Activated naive CD4-positive, alpha-beta T cell treated with anti-CD3 and anti-CD28 coated beads, Interleukin-2, amount 10 ng/mL, durations not matched to agents 7 days and 5 days (primary cell): ENCODE measurements at regions of chr10 and their contacts with region 1.

Region 1: DNA sequence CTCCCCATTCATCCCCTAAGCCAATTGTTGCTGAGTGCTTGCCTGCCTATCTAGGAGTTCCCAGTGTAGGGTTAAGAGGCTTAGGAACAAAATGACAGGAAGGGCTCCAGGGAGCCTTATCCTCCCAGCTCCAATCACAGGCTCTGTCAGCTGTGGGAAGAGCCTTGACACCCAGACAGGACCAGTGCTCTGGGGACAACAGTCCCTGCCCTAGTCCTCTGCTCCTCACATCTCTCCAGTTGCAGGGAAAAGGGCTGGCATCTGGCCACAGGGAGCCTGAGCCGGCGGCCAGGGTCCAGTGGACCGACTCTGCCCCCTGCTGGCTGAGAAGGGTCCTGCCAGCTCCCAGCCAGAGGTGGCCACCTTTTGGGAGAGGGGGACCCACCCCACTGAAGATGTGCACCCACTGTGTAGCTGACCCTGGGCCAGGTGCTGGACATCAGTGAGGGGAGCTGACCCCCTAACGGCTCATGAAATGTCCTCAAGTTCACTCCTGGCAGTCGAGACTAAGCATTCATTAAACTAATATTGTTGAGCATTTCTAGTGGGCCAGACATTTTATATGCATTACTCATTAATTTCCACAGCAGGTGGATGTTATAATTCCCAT is 17.6 kb downstream of the DNAJB12 start:
- DNase-seq: peak; percentile 75
- H3K4me3 Mint-ChIP-seq: no peak overlapping the region
- H3K27ac Mint-ChIP-seq: no peak overlapping the region
- H3K4me1 Mint-ChIP-seq: peaks cover 63% of the 10 kb centered on the region
- H3K27me3 Mint-ChIP-seq: no peaks in the 10 kb centered on the region

Region 2: GRCh38 chr10:71957546-71958275 is 379.4 kb before region 1 on chr10:
- CTCF ChIA-PET with region 1: interaction called, 12 read pairs
- DNase-seq: no peak
- H3K4me3 Mint-ChIP-seq: no peak overlapping the region
- H3K27ac Mint-ChIP-seq: no peak overlapping the region
- H3K4me1 Mint-ChIP-seq: no peaks in the 10 kb centered on the region
- H3K27me3 Mint-ChIP-seq: peaks cover 21% of the 10 kb centered on the region

Region 3: DNA sequence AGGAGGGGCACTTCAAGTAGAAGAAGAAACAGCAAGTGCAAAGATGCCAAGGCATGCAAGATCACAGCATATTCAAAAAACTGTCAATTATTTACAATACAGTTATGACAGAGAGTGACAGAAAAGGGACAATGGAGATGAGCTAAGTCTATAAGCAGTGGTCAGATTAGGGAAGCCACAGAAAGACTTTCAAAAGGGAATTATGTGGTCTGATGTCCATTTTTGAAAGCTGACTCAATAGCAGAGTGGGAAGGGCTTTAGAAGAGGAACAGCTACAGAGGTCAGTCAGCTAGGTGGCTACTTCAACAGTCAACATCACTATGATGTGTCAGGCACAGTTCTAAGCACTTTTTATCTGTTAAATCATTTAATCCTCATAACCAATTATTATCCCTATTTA is 203.6 kb before region 1 on chr10:
- CTCF ChIA-PET with region 1: interaction called, 90 read pairs
- DNase-seq: no peak
- H3K4me3 Mint-ChIP-seq: no peak overlapping the region
- H3K27ac Mint-ChIP-seq: peak overlapping the region; percentile 1
- H3K4me1 Mint-ChIP-seq: peaks cover 48% of the 10 kb centered on the region
- H3K27me3 Mint-ChIP-seq: no peaks in the 10 kb centered on the region

Region 4: GRCh38 chr10:72248468-72249151 is 88.5 kb before region 1 on chr10:
- CTCF ChIA-PET with region 1: interaction called, 10 read pairs
- DNase-seq: peak; percentile 86
- H3K4me3 Mint-ChIP-seq: peak overlapping the region; percentile 79
- H3K27ac Mint-ChIP-seq: peak overlapping the region; percentile 99
- H3K4me1 Mint-ChIP-seq: peaks cover 86% of the 10 kb centered on the region
- H3K27me3 Mint-ChIP-seq: no peaks in the 10 kb centered on the region

Region 5: GRCh38 chr10:72349438-72349837 is 12.3 kb after region 1 on chr10:
- CTCF ChIA-PET with region 1: interaction called, 10 read pairs
- DNase-seq: no peak
- H3K4me3 Mint-ChIP-seq: no peak overlapping the region
- H3K27ac Mint-ChIP-seq: no peak overlapping the region
- H3K4me1 Mint-ChIP-seq: peaks cover 47% of the 10 kb centered on the region
- H3K27me3 Mint-ChIP-seq: no peaks in the 10 kb centered on the region